MCF 10A (cell line): ENCODE measurements at regions of chr17 and their contacts with region 1.

Region 1: DNA sequence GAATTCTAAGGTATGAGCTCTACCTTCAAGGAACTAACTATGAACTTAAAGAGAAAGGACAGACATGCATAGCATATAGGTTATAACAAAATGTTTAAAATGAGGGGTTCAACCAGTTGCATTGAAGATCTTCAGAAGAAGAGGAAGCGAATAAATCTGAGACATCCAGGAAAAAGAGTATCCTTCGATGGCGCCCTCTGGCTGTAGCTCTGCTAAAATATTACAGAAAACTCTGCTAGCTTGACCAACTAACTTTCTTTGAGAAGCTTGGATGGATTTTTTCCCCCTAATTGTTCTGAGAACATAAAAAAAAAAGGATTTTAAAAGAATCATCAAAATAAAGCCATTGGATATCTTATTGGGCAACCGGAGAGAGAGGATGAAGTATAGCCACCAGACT is 659.9 kb upstream of the SOX9 start:
- DNase-seq: peak; percentile 55
- H3K4me3 Mint-ChIP-seq: no peak overlapping the region
- H3K27ac Mint-ChIP-seq: no peak overlapping the region
- H3K4me1 Mint-ChIP-seq: peaks cover 18% of the 10 kb centered on the region
- H3K27me3 Mint-ChIP-seq: no peaks in the 10 kb centered on the region
- CTCF ChIP-seq: peak; percentile 14

Region 2: DNA sequence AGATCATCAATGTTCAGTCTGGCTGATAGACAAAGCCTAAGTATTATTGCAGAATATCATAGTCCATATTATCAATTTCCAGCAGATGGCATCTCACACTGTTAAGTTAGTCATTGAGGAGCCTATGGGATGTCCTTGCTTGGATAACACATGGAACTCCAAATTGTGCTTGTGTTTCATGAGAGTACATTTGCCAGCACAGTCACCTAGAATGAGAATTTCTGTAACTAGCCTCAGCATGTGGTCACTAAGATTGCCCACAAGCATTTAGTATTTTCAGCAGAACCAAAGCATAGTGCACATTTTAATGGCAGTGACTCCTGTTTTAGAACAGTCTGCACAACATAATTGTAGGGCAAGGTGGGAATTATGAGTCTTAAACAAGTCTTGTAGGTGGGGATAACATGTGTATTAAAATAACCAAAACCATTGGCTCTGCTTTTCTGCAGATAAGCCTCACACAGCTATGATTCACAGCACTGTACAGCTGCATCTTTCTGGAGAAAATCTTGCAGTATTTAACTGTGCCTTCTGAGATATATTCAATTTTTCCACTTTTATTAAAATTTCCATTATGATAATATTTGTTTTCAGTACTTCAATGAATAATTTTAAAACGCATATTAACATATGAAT is 222.9 kb before region 1 on chr17:
- CTCF ChIA-PET with region 1: interaction called, 35 read pairs
- POLR2A ChIA-PET with region 1: no interaction called
- intact Hi-C with region 1: loop called (anchors 1 kb)
- DNase-seq: peak; percentile 63
- H3K4me3 Mint-ChIP-seq: no peak overlapping the region
- H3K27ac Mint-ChIP-seq: no peak overlapping the region
- H3K4me1 Mint-ChIP-seq: no peaks in the 10 kb centered on the region
- H3K27me3 Mint-ChIP-seq: no peaks in the 10 kb centered on the region
- CTCF ChIP-seq: peak; percentile 56

Region 3: DNA sequence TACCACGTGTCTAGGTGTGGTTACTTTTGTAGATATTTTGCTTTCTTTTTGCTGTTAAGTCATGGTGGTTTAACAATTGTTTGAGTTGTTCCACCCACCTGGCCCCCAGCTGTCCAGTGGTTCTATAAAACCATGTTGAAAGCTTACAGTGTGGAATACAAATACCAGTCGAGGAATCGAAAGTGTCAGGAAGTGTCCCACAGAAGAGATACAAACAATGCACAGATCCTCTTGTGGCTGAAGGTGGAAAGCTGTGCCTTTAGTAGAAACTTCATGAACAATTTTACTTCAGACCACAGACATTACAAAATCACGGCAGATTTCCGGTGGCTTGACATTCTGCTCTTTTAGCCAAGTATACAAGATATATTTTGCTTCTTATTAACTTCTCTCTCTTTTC is 122.5 kb before region 1 on chr17:
- CTCF ChIA-PET with region 1: no interaction called
- POLR2A ChIA-PET with region 1: no interaction called
- intact Hi-C with region 1: loop called (anchors 5 kb)
- DNase-seq: peak; percentile 58
- H3K4me3 Mint-ChIP-seq: peak overlapping the region; percentile 68
- H3K27ac Mint-ChIP-seq: peak overlapping the region; percentile 94
- H3K4me1 Mint-ChIP-seq: peaks cover 21% of the 10 kb centered on the region
- H3K27me3 Mint-ChIP-seq: no peaks in the 10 kb centered on the region
- CTCF ChIP-seq: no peak

Region 4: DNA sequence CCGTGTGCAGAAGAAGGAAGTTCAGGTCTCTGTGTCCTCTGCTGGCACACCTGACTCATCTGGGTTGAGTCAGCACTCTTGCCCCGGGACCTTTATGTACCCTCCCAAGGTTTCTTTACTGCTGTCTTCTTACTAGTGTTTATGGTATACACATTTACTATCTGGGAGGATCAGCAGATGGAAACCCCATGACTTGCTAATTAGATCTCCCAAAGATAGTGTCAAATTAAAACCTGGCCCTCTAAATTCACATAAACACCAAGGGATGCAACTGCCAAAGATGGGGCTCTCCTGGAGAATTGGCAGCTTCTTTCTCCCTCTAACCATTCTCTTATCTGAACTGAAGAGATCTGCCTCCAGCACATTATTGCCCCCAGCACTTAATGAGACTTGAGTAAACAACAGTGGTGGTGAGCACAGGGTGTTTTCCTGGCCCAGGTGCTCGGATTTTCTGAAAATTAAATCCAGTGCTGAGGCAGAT is 58.2 kb before region 1 on chr17:
- CTCF ChIA-PET with region 1: interaction called, 6 read pairs
- POLR2A ChIA-PET with region 1: interaction called, 4 read pairs
- intact Hi-C with region 1: loop called (anchors 5 kb)
- DNase-seq: peak; percentile 81
- H3K4me3 Mint-ChIP-seq: no peak overlapping the region
- H3K27ac Mint-ChIP-seq: peak overlapping the region; percentile 88
- H3K4me1 Mint-ChIP-seq: peaks cover 30% of the 10 kb centered on the region
- H3K27me3 Mint-ChIP-seq: no peaks in the 10 kb centered on the region
- CTCF ChIP-seq: no peak